ENCODE measurements at regions of chr19 and their contacts with region 1.

Region 1: GRCh38 chr19:55498246-55499120 is 10.2 kb downstream of the SSC5D start:
- DNase-seq: no peak
- H3K4me3 ChIP-seq: no peak overlapping the region
- H3K27ac ChIP-seq: no peak overlapping the region
- H3K4me1 ChIP-seq: peaks cover 4% of the 10 kb centered on the region
- H3K27me3 ChIP-seq: no peaks in the 10 kb centered on the region
- CTCF ChIP-seq: no peak

Region 2: GRCh38 chr19:55447421-55448174 is 50.9 kb before region 1 on chr19:
- CTCF ChIA-PET with region 1: no interaction called
- POLR2A ChIA-PET with region 1: no interaction called
- intact Hi-C with region 1: no loop called
- DNase-seq: peak; percentile 80
- H3K4me3 ChIP-seq: no peak overlapping the region
- H3K27ac ChIP-seq: no peak overlapping the region
- H3K4me1 ChIP-seq: peaks cover 16% of the 10 kb centered on the region
- H3K27me3 ChIP-seq: peaks cover 56% of the 10 kb centered on the region
- CTCF ChIP-seq: no peak

Region 3: DNA sequence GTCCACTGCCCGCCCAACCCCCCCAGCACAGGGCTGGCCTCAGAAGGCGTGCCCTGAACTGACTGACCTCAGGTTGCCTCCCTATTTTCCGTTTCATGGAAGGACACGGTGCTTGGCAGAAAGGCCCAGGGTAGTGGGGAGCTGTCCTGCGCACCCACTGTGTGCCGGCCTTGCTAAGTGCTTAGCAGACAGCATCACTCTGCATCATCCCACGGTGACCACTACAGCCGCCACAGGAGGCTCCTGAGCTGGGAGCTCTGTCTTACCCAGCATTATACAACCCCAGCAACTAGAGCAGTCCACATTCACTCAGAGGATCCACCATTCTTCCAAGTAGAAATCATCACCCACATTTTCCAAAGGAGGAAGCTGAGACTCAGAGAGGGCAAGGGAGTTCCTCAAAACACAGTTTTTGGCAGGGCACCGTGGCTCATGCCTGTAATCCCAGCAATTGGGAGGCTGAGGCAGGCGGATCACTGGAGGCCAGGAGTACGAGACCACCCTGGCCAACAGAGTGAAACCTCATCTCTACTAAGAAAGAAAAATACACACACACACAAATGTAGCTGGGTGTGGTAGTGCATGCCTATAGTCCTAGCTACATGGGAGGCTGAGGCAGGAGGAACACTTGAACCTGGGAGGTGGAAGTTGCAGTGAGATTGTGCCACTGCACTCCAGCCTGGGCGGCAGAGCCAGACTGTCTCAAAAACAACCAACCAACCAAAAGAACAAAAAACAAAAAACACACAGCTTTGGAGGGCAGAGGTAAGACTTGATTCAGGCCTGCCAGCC is 36.9 kb after region 1 on chr19:
- CTCF ChIA-PET with region 1: no interaction called
- POLR2A ChIA-PET with region 1: interaction called, 17 read pairs
- intact Hi-C with region 1: no loop called
- DNase-seq: no peak
- H3K4me3 ChIP-seq: no peak overlapping the region
- H3K27ac ChIP-seq: no peak overlapping the region
- H3K4me1 ChIP-seq: no peaks in the 10 kb centered on the region
- H3K27me3 ChIP-seq: no peaks in the 10 kb centered on the region
- CTCF ChIP-seq: no peak

Measured in A673 (cell line).